ENCODE measurements at regions of chr1 and their contacts with region 1.

Region 1: DNA sequence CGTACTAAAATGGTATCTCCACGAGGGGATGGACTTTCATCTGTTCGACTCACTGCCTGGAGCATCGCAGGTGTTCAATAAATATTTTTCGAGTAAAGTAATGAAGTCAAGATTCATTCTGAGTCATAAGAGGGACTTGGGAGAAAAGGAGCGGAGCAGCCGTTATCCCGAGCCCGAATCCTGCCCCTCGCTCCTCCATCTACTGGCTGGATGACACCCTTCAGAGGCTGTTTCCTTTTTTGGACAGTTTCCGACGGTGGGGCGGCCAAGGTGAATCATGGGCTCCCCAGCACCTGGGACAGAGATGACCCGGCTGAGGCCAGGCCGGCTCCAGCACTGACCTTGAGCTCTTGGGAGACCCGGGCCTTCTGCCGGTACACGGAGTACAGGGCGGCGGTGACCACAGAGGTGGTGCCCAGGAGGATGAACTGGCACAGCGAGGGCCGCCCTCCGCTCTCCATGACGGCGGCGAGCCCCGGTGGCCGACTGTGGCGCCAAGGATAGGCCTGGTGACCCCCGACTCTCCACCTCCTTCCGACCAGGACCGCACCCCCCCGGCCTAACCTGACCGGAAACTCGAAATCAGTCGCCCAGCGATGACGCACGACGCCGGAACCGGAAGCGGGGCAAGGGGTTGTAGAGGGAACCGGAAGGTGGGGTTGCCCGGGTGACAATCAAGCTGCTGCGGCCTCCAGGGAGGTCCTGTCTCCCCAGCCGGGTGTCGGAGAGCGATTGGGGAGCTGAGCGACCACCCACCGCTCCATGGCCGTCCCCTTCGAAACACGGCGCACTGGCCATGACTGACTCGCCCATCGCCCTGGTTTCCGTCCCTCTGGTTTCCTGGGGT is at the start of gene MUL1:
- DNase-seq: peak; percentile 88 to 93 (median 90)
- H3K4me3 ChIP-seq: peak within 1 kb of the TSS; percentile 84 to 91
- H3K4me3 Mint-ChIP-seq: peak within 1 kb of the TSS; percentile 84 to 95 (median 91)
- H3K27ac ChIP-seq: peak within 1 kb of the TSS; percentile 91
- H3K27ac Mint-ChIP-seq: peak within 1 kb of the TSS; percentile 77 to 99 (median 94)
- H3K4me1 ChIP-seq: peaks cover 30% of the 10 kb centered on the region
- H3K4me1 Mint-ChIP-seq: peaks cover 11 to 31% (median 21%) of the 10 kb centered on the region in 4 donors
- H3K27me3 ChIP-seq: peaks cover 6% of the 10 kb centered on the region
- H3K27me3 Mint-ChIP-seq: peaks cover 0 to 3% of the 10 kb centered on the region in 2 donors
- total RNA-seq, gene MUL1: 21.4 to 22.2 TPM

Region 2: GRCh38 chr1:20485527-20486456 is 22.0 kb before region 1 on chr1 and contains the start of gene CAMK2N1:
- CTCF ChIA-PET with region 1: interaction called, 3 read pairs
- POLR2A ChIA-PET with region 1: interaction called, 22 read pairs
- intact Hi-C with region 1: no loop called
- DNase-seq: peak; percentile 49 to 64 (median 54)
- H3K4me3 ChIP-seq: peak within 1 kb of the TSS; percentile 69 to 73
- H3K4me3 Mint-ChIP-seq: peak within 1 kb of the TSS; percentile 85 to 92 (median 89)
- H3K27ac ChIP-seq: no peak within 1 kb of the TSS
- H3K27ac Mint-ChIP-seq: peak within 1 kb of the TSS in 6 of 7 donors; percentile 41 to 90 (median 72)
- H3K4me1 ChIP-seq: peaks cover 24% of the 10 kb centered on the region
- H3K4me1 Mint-ChIP-seq: peaks cover 11 to 22% (median 16%) of the 10 kb centered on the region in 4 donors
- H3K27me3 ChIP-seq: peaks cover 15% of the 10 kb centered on the region
- H3K27me3 Mint-ChIP-seq: peaks cover 20 to 24% of the 10 kb centered on the region in 2 donors
- total RNA-seq, gene CAMK2N1: 5.5 to 6.5 TPM

Region 3: DNA sequence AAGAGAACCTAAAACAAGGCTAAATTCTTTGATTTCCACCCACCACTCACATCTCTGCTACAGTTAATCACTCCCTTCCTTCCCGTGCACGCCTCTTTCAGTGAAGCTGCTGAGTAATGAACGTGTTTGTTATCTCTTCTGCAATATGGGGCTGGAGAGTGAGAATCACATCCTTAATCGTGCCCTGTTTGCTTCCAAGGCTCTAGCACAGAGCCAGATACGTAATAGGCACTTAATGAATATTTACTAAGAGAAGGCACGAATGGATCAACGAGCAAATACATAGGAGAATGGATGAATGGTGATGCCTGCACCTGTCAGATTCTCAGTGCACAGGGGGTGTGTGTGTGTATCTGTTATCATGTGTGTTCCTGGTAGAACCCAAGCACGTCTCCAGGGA is 22.5 kb after region 1 on chr1:
- CTCF ChIA-PET with region 1: no interaction called
- POLR2A ChIA-PET with region 1: no interaction called
- intact Hi-C with region 1: no loop called
- DNase-seq: no peak
- H3K4me3 ChIP-seq: no peak overlapping the region
- H3K4me3 Mint-ChIP-seq: no peak overlapping the region
- H3K27ac ChIP-seq: no peak overlapping the region
- H3K27ac Mint-ChIP-seq: peak overlapping the region in 1 of 7 donors; percentile 31
- H3K4me1 ChIP-seq: no peaks in the 10 kb centered on the region
- H3K4me1 Mint-ChIP-seq: no peaks in the 10 kb centered on the region
- H3K27me3 ChIP-seq: peaks cover 13% of the 10 kb centered on the region
- H3K27me3 Mint-ChIP-seq: peaks cover 37 to 66% of the 10 kb centered on the region in 2 donors

Region 4: GRCh38 chr1:20661207-20662109 is 153.7 kb after region 1 on chr1 and contains the start of gene DDOST:
- CTCF ChIA-PET with region 1: no interaction called
- POLR2A ChIA-PET with region 1: no interaction called
- intact Hi-C with region 1: loop called (anchors 5 kb)
- DNase-seq: peak; percentile 93 to 97 (median 95)
- H3K4me3 ChIP-seq: peak within 1 kb of the TSS; percentile 86 to 98
- H3K4me3 Mint-ChIP-seq: peak within 1 kb of the TSS; percentile 96 to 100 (median 98)
- H3K27ac ChIP-seq: peak within 1 kb of the TSS; percentile 74
- H3K27ac Mint-ChIP-seq: peak within 1 kb of the TSS; percentile 96 to 99 (median 98)
- H3K4me1 ChIP-seq: peaks cover 37% of the 10 kb centered on the region
- H3K4me1 Mint-ChIP-seq: peaks cover 31 to 62% (median 44%) of the 10 kb centered on the region in 4 donors
- H3K27me3 ChIP-seq: no peaks in the 10 kb centered on the region
- H3K27me3 Mint-ChIP-seq: no peaks in the 10 kb centered on the region
- total RNA-seq, gene DDOST: 133 to 134 TPM

Measured in CD4-positive, alpha-beta memory T cell (primary cell).